ENCODE measurements at regions of chr6 and their contacts with region 1.

Region 1: DNA sequence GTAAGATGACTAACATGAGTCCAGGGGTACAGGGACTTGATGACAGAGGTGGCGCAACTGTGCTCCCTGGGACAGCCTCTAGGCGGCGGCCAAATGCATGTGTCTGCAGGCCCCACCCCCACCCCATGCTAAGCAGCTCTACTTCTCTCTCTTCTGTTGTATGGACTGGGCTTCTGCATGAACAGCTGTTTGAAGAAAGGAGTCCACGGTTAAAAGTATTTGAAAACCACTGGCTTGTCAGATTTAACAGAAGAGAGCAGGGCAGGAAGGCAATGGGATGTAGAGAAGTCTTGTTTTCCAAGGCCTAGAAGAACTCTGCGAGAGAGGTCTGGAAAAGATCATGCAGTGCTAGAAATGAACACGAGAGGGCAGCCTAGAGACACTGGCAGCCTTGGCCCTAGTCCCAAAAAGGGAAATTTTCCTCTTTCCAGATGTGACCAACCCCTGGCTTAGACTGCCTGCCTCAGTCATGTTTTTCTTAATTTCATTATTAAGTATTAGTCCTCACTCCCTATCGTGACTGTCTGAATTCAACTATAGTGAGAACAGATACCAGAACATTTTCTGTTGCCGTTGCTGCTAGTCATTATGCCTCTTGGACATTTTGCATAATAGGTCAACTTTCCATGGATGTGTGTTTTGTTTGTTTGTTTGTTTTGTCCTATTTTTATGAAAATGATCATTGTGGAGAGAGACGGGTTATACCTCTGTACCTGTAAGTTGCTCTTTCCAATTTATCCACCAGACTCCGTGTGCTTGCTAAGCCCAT is 265.0 kb downstream of the ADGRG6 start:
- DNase-seq: peak; percentile 89
- H3K4me3 Mint-ChIP-seq: no peak overlapping the region
- H3K27ac Mint-ChIP-seq: no peak overlapping the region
- H3K4me1 Mint-ChIP-seq: peaks cover 32% of the 10 kb centered on the region
- H3K27me3 Mint-ChIP-seq: no peaks in the 10 kb centered on the region

Region 2: DNA sequence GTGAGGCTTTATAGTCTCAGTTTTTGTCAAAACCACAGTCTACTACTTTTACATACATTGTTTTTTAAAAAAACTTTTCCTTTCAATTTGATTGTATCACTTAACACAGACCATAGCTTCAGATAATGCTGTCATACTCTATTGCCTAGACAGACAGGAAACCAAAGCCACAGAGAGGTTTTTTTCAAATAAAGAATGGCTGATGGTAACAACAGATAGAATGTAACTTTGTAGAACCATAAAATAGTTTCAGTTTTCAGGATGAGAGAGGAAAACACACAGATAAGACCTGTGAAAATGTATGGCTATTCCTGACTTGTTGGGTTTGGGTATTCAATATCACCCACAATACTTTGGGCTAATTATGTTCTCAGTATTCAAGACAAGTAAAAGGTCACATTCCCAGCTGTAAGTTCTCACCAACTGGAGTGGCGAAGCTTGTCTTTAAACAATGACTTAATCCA is 171.0 kb before region 1 on chr6:
- intact Hi-C with region 1: loop called (anchors 5 kb)
- DNase-seq: peak; percentile 77
- H3K4me3 Mint-ChIP-seq: peak overlapping the region; percentile 36
- H3K27ac Mint-ChIP-seq: peak overlapping the region; percentile 8
- H3K4me1 Mint-ChIP-seq: peaks cover 13% of the 10 kb centered on the region
- H3K27me3 Mint-ChIP-seq: peaks cover 48% of the 10 kb centered on the region

Region 3: DNA sequence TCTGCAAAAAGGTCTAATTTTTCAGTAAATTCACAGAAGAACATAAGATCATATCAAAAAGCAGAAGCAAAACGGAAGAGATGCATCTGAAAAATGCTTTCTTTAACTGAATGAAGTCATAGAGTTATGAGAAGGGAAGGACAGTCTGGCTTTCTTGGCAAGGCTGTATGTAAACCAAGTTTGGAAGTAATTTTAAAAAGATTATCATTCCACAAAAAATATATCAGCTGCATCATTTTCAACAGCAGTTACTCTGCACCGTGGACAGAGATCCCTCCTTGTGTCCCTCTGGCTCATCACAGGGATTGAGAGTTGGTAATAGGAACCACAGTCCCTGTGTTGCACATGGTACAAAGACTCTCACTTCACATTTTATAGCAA is 119.7 kb after region 1 on chr6:
- intact Hi-C with region 1: loop called (anchors 5 kb)
- DNase-seq: no peak
- H3K4me3 Mint-ChIP-seq: no peak overlapping the region
- H3K27ac Mint-ChIP-seq: no peak overlapping the region
- H3K4me1 Mint-ChIP-seq: peaks cover 4% of the 10 kb centered on the region
- H3K27me3 Mint-ChIP-seq: no peaks in the 10 kb centered on the region

Region 4: GRCh38 chr6:143026696-143027449 is 460.1 kb after region 1 on chr6:
- intact Hi-C with region 1: loop called (anchors 2 kb)
- DNase-seq: peak; percentile 82
- H3K4me3 Mint-ChIP-seq: no peak overlapping the region
- H3K27ac Mint-ChIP-seq: no peak overlapping the region
- H3K4me1 Mint-ChIP-seq: peaks cover 4% of the 10 kb centered on the region
- H3K27me3 Mint-ChIP-seq: no peaks in the 10 kb centered on the region

Region 5: DNA sequence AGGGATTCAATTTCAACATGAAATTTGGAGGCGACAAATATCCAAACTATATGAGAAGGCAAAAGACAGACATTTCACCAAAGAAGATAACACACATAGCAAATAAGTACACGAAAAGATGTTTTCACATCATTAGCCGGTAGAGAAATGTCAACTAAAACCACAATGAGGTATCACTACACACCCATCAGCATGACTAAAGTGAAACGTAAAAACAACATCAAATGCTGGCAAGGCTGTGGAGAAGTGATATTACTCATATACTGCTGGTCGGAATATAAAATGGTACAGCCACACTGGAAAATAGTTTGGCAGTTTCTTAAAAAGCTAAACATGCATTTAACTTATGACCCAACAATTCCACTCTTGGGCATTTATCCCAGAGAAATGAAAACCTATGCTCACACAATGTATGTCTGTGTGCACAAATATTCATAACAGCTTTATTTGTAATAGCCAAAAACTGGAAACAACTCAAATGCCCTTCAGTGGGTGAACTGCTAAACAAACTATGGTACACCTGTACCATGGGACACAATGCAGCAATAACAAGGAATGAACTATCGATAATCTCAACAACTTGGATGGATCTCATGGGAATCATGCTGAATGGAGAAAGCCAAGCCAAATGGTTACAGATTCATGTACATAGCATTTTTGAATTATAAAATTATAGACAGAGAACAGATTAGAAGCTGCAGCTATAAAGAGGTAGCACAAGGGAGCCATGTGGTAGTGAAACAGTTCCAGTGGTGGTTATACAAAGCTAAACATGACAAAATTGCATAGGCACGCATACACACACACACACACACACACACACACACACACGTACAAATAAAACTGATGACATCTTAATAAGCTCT is 875.1 kb after region 1 on chr6:
- intact Hi-C with region 1: loop called (anchors 5 kb)
- DNase-seq: peak; percentile 77
- H3K4me3 Mint-ChIP-seq: peak overlapping the region; percentile 47
- H3K27ac Mint-ChIP-seq: peak overlapping the region; percentile 95
- H3K4me1 Mint-ChIP-seq: peaks cover 49% of the 10 kb centered on the region
- H3K27me3 Mint-ChIP-seq: no peaks in the 10 kb centered on the region